Caco-2 (cell line): ENCODE measurements at regions of chr1 and their contacts with region 1.

Region 1: DNA sequence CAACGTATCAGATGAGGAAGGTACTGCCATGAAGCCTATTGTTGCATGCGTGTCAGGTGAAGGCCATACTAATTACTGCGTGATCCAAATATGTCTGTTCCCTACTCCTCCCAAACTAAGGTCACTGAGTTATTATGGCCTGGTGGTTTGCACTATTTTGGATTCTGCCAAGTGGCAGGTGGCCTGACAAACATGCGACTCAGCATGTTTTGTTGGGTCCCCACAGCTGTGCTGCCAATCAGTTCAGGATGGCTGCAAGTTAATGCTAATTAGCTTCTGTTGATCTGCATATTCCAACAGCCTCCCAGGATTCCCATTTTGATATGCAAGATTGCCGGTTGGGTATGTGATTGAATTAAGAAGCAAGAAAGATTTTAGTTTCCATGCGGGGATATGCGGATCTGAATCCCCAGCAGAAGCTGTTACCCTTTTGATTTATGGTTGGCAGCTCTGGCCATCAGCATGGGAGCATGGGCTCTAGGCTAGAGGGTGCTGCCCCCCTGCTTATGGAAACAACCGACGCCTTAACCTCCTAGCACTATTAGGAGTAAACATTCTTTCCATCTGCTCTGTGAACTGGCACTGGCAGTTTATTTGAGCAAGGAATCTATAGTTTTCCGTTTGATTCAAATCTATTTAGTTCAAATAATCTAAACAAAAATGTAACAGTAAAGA is 429.8 kb upstream of the C1orf87 start:
- DNase-seq: no peak
- H3K4me3 ChIP-seq: no peak overlapping the region
- H3K4me3 Mint-ChIP-seq: no peak overlapping the region
- H3K27ac Mint-ChIP-seq: no peak overlapping the region
- H3K4me1 ChIP-seq: no peaks in the 10 kb centered on the region
- H3K4me1 Mint-ChIP-seq: no peaks in the 10 kb centered on the region
- H3K27me3 ChIP-seq: no peaks in the 10 kb centered on the region
- H3K27me3 Mint-ChIP-seq: peaks cover 14% of the 10 kb centered on the region
- CTCF ChIP-seq: no peak

Region 2: GRCh38 chr1:60516996-60517395 is 13.6 kb after region 1 on chr1:
- CTCF ChIA-PET with region 1: no interaction called
- POLR2A ChIA-PET with region 1: no interaction called
- intact Hi-C with region 1: no loop called
- DNase-seq: no peak
- H3K4me3 ChIP-seq: no peak overlapping the region
- H3K4me3 Mint-ChIP-seq: no peak overlapping the region
- H3K27ac Mint-ChIP-seq: no peak overlapping the region
- H3K4me1 ChIP-seq: no peaks in the 10 kb centered on the region
- H3K4me1 Mint-ChIP-seq: no peaks in the 10 kb centered on the region
- H3K27me3 ChIP-seq: no peaks in the 10 kb centered on the region
- H3K27me3 Mint-ChIP-seq: no peaks in the 10 kb centered on the region
- CTCF ChIP-seq: no peak

Region 3: GRCh38 chr1:60560701-60561100 is 57.3 kb after region 1 on chr1:
- CTCF ChIA-PET with region 1: no interaction called
- POLR2A ChIA-PET with region 1: no interaction called
- intact Hi-C with region 1: loop called (anchors 2 kb)
- DNase-seq: no peak
- H3K4me3 ChIP-seq: no peak overlapping the region
- H3K4me3 Mint-ChIP-seq: no peak overlapping the region
- H3K27ac Mint-ChIP-seq: no peak overlapping the region
- H3K4me1 ChIP-seq: no peaks in the 10 kb centered on the region
- H3K4me1 Mint-ChIP-seq: no peaks in the 10 kb centered on the region
- H3K27me3 ChIP-seq: no peaks in the 10 kb centered on the region
- H3K27me3 Mint-ChIP-seq: no peaks in the 10 kb centered on the region
- CTCF ChIP-seq: no peak